ENCODE measurements at regions of chr3 and their contacts with region 1.

Region 1: GRCh38 chr3:15205934-15206661 is at the start of gene CAPN7:
- DNase-seq: peak; percentile 93 to 96
- ATAC-seq: peak; percentile 96 to 100 (median 98)
- H3K4me3 ChIP-seq: peak within 1 kb of the TSS; percentile 71 to 100 (median 94)
- H3K27ac ChIP-seq: peak within 1 kb of the TSS; percentile 94 to 99 (median 97)
- H3K4me1 ChIP-seq: peaks cover 4 to 49% (median 30%) of the 10 kb centered on the region in 9 donors
- H3K27me3 ChIP-seq: no peaks in the 10 kb centered on the region
- CTCF ChIP-seq: peak; percentile 20 to 65 (median 38)
- total RNA-seq, gene CAPN7: 22.8 to 38.0 (median 26.7) TPM

Region 2: GRCh38 chr3:15098503-15099363 is 107.4 kb before region 1 on chr3 and contains the start of gene RBSN:
- intact Hi-C with region 1: loop called in 4 of 10 experiments (anchors 5 to 10 kb)
- DNase-seq: peak; percentile 95 to 96
- ATAC-seq: peak; percentile 77 to 91 (median 84)
- H3K4me3 ChIP-seq: peak within 1 kb of the TSS; percentile 68 to 97 (median 86)
- H3K27ac ChIP-seq: peak within 1 kb of the TSS; percentile 18 to 93 (median 86)
- H3K4me1 ChIP-seq: peaks cover 3 to 51% (median 37%) of the 10 kb centered on the region in 9 donors
- H3K27me3 ChIP-seq: no peaks in the 10 kb centered on the region
- CTCF ChIP-seq: no peak
- total RNA-seq, gene RBSN: 17.4 to 23.8 (median 21.2) TPM

Region 3: GRCh38 chr3:15108082-15108545 is 98.0 kb before region 1 on chr3:
- intact Hi-C with region 1: loop called in 7 of 10 experiments (anchors 5 to 10 kb)
- DNase-seq: peak; percentile 51 to 80
- ATAC-seq: peak; percentile 69 to 90 (median 83)
- H3K4me3 ChIP-seq: no peak overlapping the region
- H3K27ac ChIP-seq: no peak overlapping the region
- H3K4me1 ChIP-seq: peaks cover 0 to 17% (median 4%) of the 10 kb centered on the region in 9 donors
- H3K27me3 ChIP-seq: peaks cover 0 to 7% (median 0%) of the 10 kb centered on the region in 7 donors
- CTCF ChIP-seq: peak; percentile 71 to 95 (median 91)

Region 4: DNA sequence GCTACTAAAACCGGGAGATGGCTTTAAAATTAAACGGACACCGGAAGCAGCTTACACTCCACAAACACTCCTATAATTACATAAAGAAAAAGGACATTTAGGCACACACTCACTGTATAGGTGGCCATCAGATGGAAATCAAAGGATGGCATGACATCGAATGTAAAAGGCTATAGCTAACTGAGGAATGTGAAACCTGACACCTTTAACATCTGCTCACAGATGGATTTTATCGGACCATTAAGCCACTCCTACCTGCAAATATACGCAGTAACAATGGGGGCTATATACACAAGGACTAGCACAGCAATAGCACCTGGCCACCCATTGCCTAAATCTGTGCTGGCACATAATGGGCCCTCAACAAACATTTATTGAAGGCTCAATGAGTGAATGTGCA is 92.6 kb before region 1 on chr3:
- intact Hi-C with region 1: loop called in 5 of 10 experiments (anchors 5 to 10 kb)
- DNase-seq: no peak
- ATAC-seq: no peak
- H3K4me3 ChIP-seq: no peak overlapping the region
- H3K27ac ChIP-seq: no peak overlapping the region
- H3K4me1 ChIP-seq: peaks cover 0 to 2% (median 0%) of the 10 kb centered on the region in 9 donors
- H3K27me3 ChIP-seq: peaks cover 0 to 10% (median 0%) of the 10 kb centered on the region in 7 donors
- CTCF ChIP-seq: no peak

Region 5: DNA sequence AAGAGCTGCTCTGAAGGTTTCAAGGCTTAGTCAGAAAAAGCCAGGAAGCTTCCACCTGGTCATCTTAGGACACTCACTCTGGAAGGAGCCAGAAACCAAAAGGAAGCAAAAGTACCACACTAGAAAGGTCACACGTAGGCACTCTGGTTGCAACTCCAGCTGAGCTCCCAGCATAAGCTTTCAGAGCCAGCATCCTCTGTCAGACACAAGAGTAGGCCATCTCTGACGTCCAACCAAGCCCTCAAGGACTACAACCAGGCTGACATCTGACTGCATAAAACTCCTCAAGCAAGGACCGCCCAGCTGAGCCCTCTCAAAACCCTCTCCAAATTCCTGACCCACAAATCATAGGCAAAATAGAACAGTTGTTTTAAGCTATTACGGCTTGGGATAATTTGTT is 113.5 kb after region 1 on chr3:
- intact Hi-C with region 1: no loop called
- DNase-seq: peak in 1 of 2 donors; percentile 39
- ATAC-seq: peak; percentile 48 to 80 (median 63)
- H3K4me3 ChIP-seq: no peak overlapping the region
- H3K27ac ChIP-seq: peak overlapping the region in 9 of 10 donors; percentile 18 to 74 (median 45)
- H3K4me1 ChIP-seq: peaks cover 8 to 87% (median 73%) of the 10 kb centered on the region in 9 donors
- H3K27me3 ChIP-seq: no peaks in the 10 kb centered on the region
- CTCF ChIP-seq: no peak

Region 6: GRCh38 chr3:15405448-15406050 is 199.5 kb after region 1 on chr3:
- intact Hi-C with region 1: loop called in 9 of 10 experiments (anchors 2 to 10 kb)
- DNase-seq: no peak
- ATAC-seq: peak in 5 of 8 donors; percentile 49 to 75 (median 60)
- H3K4me3 ChIP-seq: no peak overlapping the region
- H3K27ac ChIP-seq: no peak overlapping the region
- H3K4me1 ChIP-seq: peaks cover 0 to 36% (median 0%) of the 10 kb centered on the region in 9 donors
- H3K27me3 ChIP-seq: no peaks in the 10 kb centered on the region
- CTCF ChIP-seq: peak; percentile 31 to 77 (median 66)

Region 7: GRCh38 chr3:15557511-15557946 is 351.4 kb after region 1 on chr3:
- intact Hi-C with region 1: loop called in 9 of 10 experiments (anchors 2 to 10 kb)
- DNase-seq: peak in 1 of 2 donors; percentile 55
- ATAC-seq: peak; percentile 59 to 83 (median 75)
- H3K4me3 ChIP-seq: no peak overlapping the region
- H3K27ac ChIP-seq: peak overlapping the region in 1 of 10 donors; percentile 73
- H3K4me1 ChIP-seq: peaks cover 0 to 15% (median 0%) of the 10 kb centered on the region in 9 donors
- H3K27me3 ChIP-seq: no peaks in the 10 kb centered on the region
- CTCF ChIP-seq: peak; percentile 40 to 76 (median 68)

Region 8: DNA sequence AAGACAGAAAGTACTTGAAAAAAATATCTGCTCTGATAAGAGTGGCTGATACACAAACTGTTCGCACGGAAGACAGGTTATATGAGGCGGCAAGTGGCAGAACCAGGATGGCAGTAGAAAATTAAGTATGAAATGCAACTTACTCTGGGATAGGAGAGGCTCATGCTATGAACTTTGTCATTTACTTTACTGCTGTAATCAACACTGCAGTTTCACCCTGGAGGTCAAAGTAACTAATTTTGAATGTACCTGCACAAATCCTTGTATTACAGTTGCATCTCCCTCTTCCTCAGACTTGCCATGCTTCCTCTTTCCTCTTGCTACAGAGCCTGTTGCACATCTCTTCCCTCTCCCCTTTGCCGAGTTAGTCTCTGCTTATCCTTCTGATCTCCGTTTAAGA is 356.5 kb after region 1 on chr3:
- intact Hi-C with region 1: loop called in 8 of 10 experiments (anchors 2 to 10 kb)
- DNase-seq: no peak
- ATAC-seq: no peak
- H3K4me3 ChIP-seq: no peak overlapping the region
- H3K27ac ChIP-seq: no peak overlapping the region
- H3K4me1 ChIP-seq: peaks cover 0 to 3% (median 0%) of the 10 kb centered on the region in 9 donors
- H3K27me3 ChIP-seq: no peaks in the 10 kb centered on the region
- CTCF ChIP-seq: no peak

Measured in heart right ventricle (tissue), 16 donors.